Activated CD8-positive, alpha-beta T cell treated with anti-CD3 and anti-CD28 coated beads for 36 hours (primary cell): ENCODE measurements at regions of chr6 and their contacts with region 1.

Region 1: GRCh38 chr6:142545147-142545546 is 243.3 kb downstream of the ADGRG6 start:
- DNase-seq: peak; percentile 28
- ATAC-seq: peak; percentile 73
- H3K4me3 Mint-ChIP-seq: no peak overlapping the region
- H3K27ac Mint-ChIP-seq: peak overlapping the region; percentile 10
- H3K4me1 Mint-ChIP-seq: peaks cover 30% of the 10 kb centered on the region
- H3K27me3 Mint-ChIP-seq: no peaks in the 10 kb centered on the region
- CTCF ChIP-seq: no peak

Region 2: DNA sequence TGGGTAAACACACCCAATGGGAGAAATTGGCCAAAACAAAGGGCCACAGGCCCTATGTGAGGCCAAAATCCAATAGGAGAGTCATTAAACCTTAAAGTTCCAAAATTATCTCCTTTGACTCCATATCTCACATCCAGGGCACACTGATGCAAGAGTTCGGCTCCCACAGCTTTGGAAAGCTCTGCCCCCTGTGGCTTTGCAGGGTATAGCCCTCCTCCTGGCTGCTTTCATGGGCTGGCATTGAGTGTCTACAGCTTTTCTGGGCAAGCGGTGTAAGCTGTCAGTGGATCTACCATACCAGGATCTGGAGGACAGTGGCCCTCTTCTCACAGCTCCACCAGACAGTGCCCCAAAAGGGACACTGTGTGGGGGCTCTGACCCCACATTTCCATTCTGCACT is 82.9 kb before region 1 on chr6:
- CTCF ChIA-PET with region 1: no interaction called
- POLR2A ChIA-PET with region 1: no interaction called
- intact Hi-C with region 1: no loop called
- DNase-seq: no peak
- ATAC-seq: no peak
- H3K4me3 Mint-ChIP-seq: no peak overlapping the region
- H3K27ac Mint-ChIP-seq: no peak overlapping the region
- H3K4me1 Mint-ChIP-seq: peaks cover 9% of the 10 kb centered on the region
- H3K27me3 Mint-ChIP-seq: no peaks in the 10 kb centered on the region
- CTCF ChIP-seq: no peak

Region 3: GRCh38 chr6:142485256-142485655 is 59.9 kb before region 1 on chr6:
- CTCF ChIA-PET with region 1: no interaction called
- POLR2A ChIA-PET with region 1: no interaction called
- intact Hi-C with region 1: loop called (anchors 5 kb)
- DNase-seq: no peak
- ATAC-seq: no peak
- H3K4me3 Mint-ChIP-seq: no peak overlapping the region
- H3K27ac Mint-ChIP-seq: no peak overlapping the region
- H3K4me1 Mint-ChIP-seq: no peaks in the 10 kb centered on the region
- H3K27me3 Mint-ChIP-seq: peaks cover under 1% of the 10 kb centered on the region
- CTCF ChIP-seq: no peak